AG04450 (cell line): ENCODE measurements at regions of chr17 and their contacts with region 1.

Region 1: GRCh38 chr17:78360371-78361224 is 721 bp upstream of the SOCS3 start:
- DNase-seq: peak; percentile 63
- H3K4me3 ChIP-seq: peak overlapping the region; percentile 59
- H3K27ac ChIP-seq: peak overlapping the region; percentile 73
- H3K27me3 ChIP-seq: no peaks in the 10 kb centered on the region
- CTCF ChIP-seq: peak; percentile 90

Region 2: DNA sequence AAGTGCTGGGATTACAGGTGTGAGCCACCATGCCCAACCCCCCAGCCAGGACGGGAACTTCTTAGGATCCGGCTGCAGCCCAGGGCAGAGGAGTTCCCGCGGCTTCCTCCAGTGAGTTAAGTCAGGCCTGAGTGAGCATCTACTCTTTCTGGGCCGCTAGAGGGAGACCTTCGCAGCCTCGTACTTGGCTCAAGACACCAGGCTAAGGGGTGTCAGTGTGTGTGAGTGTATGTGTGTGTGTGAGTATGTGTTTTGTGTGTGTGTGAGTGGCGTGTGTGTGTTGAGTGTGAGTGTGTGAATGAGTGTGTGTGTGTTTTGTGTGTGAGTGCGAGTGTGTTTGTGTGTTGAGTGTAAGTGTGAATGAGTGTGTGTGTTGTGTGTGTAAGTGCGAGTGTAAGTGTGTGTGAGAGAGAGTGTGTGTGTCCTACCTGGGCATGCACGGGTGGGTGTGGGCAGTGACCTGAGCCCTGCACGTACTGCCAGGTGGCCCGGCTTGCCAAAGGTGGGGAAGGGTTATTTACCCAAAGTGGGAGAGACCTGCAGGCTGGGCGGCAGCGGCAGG is 70.7 kb before region 1 on chr17:
- CTCF ChIA-PET with region 1: interaction called, 15 read pairs
- POLR2A ChIA-PET with region 1: interaction called, 13 read pairs
- DNase-seq: peak; percentile 82
- H3K4me3 ChIP-seq: no peak overlapping the region
- H3K27ac ChIP-seq: no peak overlapping the region
- H3K27me3 ChIP-seq: no peaks in the 10 kb centered on the region
- CTCF ChIP-seq: peak; percentile 90

Region 3: GRCh38 chr17:78341559-78342448 is 18.8 kb before region 1 on chr17:
- CTCF ChIA-PET with region 1: interaction called, 4 read pairs
- POLR2A ChIA-PET with region 1: interaction called, 21 read pairs
- DNase-seq: no peak
- H3K4me3 ChIP-seq: peak overlapping the region; percentile 25; the same call in 1 of the 2 replicates
- H3K27ac ChIP-seq: peak overlapping the region; percentile 92
- H3K27me3 ChIP-seq: no peaks in the 10 kb centered on the region
- CTCF ChIP-seq: no peak

Region 4: DNA sequence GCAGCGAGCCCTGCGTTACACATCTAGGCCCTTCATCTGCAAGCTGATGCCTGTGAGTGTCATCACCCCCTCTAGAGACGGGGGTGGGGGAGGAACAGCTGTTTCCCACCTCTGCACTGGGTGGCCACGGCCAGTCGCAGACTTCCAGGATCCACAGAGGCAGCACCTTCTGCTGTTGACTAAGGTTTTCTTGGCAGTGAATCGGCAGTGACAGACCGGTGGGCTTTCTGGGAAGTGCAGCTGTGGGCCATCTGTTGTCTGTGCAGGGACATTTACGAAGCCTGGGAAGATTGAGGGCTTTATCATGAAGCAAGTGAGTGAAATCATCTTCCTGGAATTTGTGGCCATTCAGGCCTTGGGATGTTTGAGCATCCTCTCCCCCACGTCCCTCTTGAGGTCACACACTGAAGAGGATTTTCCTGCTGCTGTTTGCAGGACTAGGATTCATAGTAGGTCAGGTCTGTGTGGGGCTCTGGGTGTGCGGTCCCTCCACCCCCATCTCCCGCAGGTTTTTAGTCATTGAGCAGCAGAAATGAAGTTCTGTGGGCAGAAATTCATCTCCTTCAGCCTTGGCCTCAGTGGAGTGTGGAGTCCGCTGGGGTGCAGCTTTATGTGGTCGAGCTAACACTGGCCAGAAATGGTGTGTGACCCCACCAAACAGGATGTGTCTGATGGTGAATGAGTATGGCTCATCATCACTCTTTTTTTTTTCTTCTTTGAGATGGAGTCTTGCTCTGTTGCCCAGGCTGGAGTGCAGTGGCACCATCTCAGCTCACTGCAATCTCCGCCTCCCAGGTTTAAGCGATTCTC is 29.8 kb after region 1 on chr17:
- CTCF ChIA-PET with region 1: interaction called, 4 read pairs
- POLR2A ChIA-PET with region 1: interaction called, 13 read pairs
- DNase-seq: peak; percentile 96
- H3K4me3 ChIP-seq: no peak overlapping the region
- H3K27ac ChIP-seq: peak overlapping the region; percentile 97
- H3K27me3 ChIP-seq: no peaks in the 10 kb centered on the region
- CTCF ChIP-seq: peak; percentile 18; the same call in 1 of the 2 replicates

Region 5: DNA sequence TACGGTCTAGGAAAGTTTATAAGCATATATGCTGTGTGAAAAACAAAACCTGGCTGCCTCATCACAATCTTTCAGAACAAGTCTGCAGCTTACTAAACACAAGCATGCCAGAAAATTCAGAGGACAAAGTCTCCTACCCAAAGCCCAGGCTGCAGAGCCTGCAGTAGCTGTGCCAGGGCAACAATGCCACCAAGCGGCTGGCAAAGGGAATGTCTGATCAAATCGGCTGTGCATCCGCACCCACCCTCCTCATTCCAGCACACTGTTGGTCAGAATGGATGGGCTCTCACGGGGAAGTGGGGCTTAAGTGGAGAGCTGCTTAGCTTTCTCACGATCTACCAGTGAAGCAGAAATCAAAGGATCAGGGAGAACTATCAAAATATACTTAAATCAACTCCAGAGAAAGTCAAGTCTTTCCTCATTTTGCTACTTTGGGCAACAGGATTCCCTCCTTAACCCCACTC is 347.9 kb after region 1 on chr17:
- CTCF ChIA-PET with region 1: interaction called, 15 read pairs
- POLR2A ChIA-PET with region 1: no interaction called
- DNase-seq: peak; percentile 72
- H3K4me3 ChIP-seq: no peak overlapping the region
- H3K27ac ChIP-seq: no peak overlapping the region
- H3K27me3 ChIP-seq: no peaks in the 10 kb centered on the region
- CTCF ChIP-seq: peak; percentile 95

Region 6: DNA sequence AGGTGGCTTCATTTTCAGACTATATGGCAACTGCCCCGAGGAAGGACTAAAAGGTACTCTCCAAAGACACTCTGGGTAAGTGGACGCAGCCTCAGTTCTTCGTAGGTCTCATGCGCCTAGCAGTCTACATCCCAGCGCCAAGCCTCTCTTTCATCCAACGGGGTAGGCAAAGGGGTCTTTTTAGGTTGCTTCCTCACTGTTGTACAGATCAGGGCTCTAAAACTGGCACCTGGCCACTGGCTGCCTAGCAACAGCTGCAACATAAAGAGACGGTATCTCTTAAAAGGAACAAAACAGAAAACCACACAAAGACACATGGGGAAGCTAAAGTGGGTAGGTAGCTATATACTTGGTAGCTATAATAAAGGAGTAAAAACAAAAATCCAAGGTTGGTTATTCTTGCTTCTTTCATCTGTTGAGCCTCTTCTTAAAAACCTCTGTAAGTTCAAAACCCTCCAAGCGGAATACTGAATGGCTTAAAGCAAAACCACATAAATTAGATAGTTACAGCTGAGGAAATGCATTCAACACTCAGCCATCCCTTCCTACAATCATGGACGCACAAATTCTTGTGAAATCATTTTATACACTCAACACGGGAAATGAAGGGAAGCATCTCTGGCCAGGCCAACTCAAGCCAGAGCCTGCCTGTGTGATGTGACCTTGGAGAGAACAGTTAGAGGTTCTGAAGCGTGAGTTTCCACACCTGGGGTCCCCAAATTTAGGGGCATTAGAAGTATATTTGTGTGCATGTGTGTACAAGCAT is 398.8 kb after region 1 on chr17:
- CTCF ChIA-PET with region 1: no interaction called
- POLR2A ChIA-PET with region 1: no interaction called
- DNase-seq: no peak
- H3K4me3 ChIP-seq: no peak overlapping the region
- H3K27ac ChIP-seq: no peak overlapping the region
- H3K27me3 ChIP-seq: no peaks in the 10 kb centered on the region
- CTCF ChIP-seq: no peak

Region 7: DNA sequence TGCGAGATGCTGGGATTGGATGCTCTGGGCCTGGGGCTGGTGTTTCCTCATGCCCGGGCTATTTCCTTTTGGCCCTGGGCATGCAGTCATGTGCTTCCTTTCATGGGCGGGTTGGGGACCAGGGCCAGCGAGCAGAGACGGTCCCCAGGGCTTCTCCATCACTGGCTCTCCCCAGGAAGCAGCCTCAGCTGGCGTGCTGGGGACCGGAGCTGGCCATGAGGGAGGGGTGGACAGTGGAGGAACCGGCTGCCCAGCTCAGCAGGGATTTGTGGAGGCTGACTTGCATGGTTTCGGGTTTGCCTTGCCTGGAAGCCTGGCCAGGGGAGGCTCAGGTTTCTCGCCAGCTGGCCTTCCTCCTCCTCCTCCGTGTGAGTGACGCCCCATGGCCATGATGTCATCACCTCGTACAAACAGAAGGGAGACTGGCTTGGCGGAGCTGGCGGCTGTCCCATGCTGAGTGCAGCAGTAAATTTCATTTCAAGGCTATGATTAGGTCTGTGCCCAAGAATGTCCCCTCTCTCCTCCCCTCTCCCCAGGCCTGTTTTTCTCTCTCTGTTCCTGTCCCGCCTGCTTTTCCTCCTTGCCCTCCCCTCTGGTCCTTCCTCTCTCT is 573.5 kb after region 1 on chr17:
- CTCF ChIA-PET with region 1: no interaction called
- POLR2A ChIA-PET with region 1: no interaction called
- DNase-seq: peak; percentile 99
- H3K4me3 ChIP-seq: peak overlapping the region; percentile 45
- H3K27ac ChIP-seq: peak overlapping the region; percentile 100
- H3K27me3 ChIP-seq: no peaks in the 10 kb centered on the region
- CTCF ChIP-seq: no peak